Aorta (tissue), 5 donors: ENCODE measurements at regions of chr4 and their contacts with region 1.

Region 1: DNA sequence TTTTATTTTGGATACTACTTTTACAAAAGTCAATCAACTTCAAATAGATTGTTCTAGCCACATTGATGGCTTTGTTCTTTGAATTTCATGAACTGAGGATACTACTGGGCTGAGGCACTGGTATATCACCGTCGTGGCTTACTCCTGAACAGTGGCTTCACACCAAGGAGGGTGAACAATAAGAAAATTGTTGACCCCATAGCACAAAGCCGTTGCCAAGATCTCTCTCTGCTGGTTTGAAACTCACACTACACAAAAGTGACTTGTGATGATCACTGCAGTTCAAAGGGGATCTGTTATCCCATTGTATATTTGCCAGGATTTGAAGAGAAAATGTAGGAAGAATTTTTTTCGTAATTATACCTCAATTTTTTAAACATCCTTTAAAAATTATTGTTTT is 119.6 kb downstream of the PDLIM5 start:
- DNase-seq: no peak
- ATAC-seq: no peak
- H3K4me3 ChIP-seq: no peak overlapping the region
- H3K27ac ChIP-seq: no peak overlapping the region
- H3K4me1 ChIP-seq: peaks cover 2 to 4% of the 10 kb centered on the region in 2 donors
- H3K27me3 ChIP-seq: no peaks in the 10 kb centered on the region

Region 2: GRCh38 chr4:94519925-94520789 is 51.1 kb before region 1 on chr4:
- intact Hi-C with region 1: loop called in 1 of 2 experiments (anchors 5 kb)
- DNase-seq: no peak
- ATAC-seq: no peak
- H3K4me3 ChIP-seq: no peak overlapping the region
- H3K27ac ChIP-seq: peak overlapping the region in 1 of 2 donors; percentile 14
- H3K4me1 ChIP-seq: peaks cover 2 to 21% of the 10 kb centered on the region in 2 donors
- H3K27me3 ChIP-seq: no peaks in the 10 kb centered on the region

Region 3: DNA sequence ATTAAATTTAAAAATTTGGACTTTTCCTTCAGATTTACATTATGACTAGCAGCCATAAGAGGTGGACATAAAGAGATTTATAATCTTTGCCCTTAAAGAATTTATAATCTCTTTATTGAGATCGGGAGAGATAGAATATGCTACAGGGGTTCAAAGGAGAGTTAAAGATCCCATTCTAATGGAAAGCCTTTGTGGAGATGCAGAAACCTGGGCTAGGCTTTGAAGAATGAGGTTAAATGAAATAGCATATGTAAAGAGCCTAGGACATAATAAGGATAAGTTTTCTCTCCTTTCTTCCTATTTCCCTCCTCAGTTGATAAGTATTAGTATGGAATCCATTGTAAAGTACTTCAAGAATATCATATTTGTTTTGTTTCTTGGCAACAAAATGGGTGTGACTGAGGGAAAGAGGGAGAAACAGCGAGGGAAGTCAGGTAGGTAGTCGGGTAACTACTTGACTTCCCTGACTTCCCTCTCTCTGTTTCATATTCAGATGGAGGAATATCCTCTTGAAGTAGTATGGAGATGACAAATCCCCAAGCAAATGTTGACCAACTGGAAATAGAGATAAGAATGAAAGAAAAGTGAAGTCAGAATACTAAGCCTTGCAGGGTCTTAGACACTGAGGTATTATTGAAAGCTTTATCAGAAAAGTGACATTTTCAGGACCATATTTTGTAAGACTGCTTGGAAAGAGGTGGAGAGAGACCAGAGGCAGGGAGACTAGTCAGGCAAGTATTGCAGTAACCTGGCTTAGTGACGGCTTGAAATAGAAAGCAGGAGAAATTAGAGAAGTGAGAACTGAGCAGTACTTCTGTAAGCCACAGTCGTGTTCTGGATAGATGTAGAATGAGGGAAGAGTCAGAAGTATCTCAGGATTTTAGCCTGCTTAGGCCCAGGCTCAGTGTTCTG is 36.6 kb before region 1 on chr4:
- intact Hi-C with region 1: loop called in 1 of 2 experiments (anchors 5 kb)
- DNase-seq: no peak
- ATAC-seq: no peak
- H3K4me3 ChIP-seq: peak overlapping the region in 1 of 2 donors; percentile 10
- H3K27ac ChIP-seq: peak overlapping the region in 1 of 2 donors; percentile 71
- H3K4me1 ChIP-seq: peaks cover 9 to 17% of the 10 kb centered on the region in 2 donors
- H3K27me3 ChIP-seq: no peaks in the 10 kb centered on the region

Region 4: GRCh38 chr4:94701631-94702300 is 130.5 kb after region 1 on chr4:
- intact Hi-C with region 1: no loop called
- DNase-seq: no peak
- ATAC-seq: peak; percentile 33
- H3K4me3 ChIP-seq: no peak overlapping the region
- H3K27ac ChIP-seq: no peak overlapping the region
- H3K4me1 ChIP-seq: no peaks in the 10 kb centered on the region
- H3K27me3 ChIP-seq: no peaks in the 10 kb centered on the region